MCF 10A (cell line): ENCODE measurements at regions of chr1 and their contacts with region 1.

Region 1: DNA sequence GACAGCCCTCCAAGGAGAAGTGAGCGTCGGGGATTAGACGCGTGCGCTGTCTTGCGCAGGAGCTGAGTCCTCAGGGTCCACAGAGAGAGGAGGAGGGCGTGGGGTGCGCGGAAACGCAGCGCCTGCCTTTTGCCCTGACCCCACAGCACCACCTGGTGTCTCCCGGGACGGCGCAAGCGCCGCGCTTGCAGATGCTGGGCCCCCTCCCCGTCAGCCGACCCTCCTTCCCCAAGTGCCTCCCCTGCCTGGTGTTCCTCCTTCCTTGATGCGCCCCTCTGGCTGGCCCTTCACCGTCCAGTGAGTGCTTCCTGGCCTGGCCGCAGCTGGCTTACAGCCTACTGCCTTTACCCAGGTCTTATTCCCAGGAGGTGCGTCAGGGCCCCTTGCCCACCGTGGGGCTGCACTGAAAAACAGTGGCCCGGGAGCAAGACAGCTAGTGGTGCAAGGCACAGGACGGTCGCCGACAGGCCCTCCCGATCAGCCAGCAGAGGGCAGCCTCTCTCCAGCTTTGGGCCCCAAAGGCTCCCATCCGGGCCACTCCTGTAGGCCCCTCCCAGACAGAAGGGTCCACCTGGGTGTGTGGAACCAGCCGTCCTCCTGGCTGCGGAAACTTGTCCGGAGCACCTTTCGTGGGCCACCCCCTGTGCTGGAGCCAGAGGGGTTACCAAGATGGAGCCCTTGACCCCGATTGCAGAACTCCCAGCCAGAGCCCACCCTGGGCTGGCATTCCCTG is 12.9 kb upstream of the PHLDA3 start:
- DNase-seq: peak; percentile 94
- H3K4me3 Mint-ChIP-seq: peak overlapping the region; percentile 0
- H3K27ac Mint-ChIP-seq: no peak overlapping the region
- H3K4me1 Mint-ChIP-seq: peaks cover 33% of the 10 kb centered on the region
- H3K27me3 Mint-ChIP-seq: no peaks in the 10 kb centered on the region
- CTCF ChIP-seq: peak; percentile 100

Region 2: GRCh38 chr1:201376464-201377374 is 105.2 kb before region 1 on chr1:
- CTCF ChIA-PET with region 1: no interaction called
- POLR2A ChIA-PET with region 1: no interaction called
- intact Hi-C with region 1: no loop called
- DNase-seq: peak; percentile 80
- H3K4me3 Mint-ChIP-seq: no peak overlapping the region
- H3K27ac Mint-ChIP-seq: no peak overlapping the region
- H3K4me1 Mint-ChIP-seq: no peaks in the 10 kb centered on the region
- H3K27me3 Mint-ChIP-seq: peaks cover 37% of the 10 kb centered on the region
- CTCF ChIP-seq: peak; percentile 67

Region 3: DNA sequence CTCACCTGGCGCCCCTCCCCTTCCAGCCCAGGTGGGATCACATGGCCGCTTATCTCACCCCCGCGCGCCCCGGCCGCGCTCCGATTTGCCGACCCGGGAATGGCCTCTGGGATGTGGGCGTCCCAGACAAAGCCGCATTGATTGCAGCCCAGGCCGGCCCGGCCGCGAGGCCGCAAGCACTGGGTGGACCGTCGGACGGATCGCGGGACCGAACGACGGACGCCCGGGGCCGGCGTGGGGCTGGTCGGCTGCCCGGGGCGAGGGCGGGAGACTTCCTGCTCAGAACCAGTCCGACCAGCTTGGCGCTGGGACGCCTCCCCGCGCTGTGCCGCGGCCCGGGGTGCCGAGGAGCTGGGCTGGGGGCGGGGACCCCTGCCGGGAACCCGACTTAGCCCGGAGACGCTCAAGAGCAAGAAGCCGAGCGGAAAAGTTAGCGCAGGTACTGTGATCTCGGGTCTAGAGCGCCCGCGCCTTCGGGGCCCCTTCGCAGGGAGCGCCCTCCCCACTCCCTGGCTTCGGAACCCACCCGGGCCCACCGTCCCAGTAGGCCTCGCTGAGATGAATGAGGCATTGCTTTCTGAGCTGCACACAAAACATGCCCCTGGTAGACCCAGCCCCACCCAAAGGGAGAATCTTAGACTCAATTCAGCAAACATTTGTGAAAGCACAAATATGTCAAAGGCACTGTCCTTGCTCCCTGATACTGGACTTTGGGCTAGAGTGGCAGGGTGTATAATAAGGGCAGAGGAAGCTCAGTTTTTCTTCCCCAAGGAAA is 82.4 kb before region 1 on chr1:
- CTCF ChIA-PET with region 1: interaction called, 11 read pairs
- POLR2A ChIA-PET with region 1: no interaction called
- intact Hi-C with region 1: no loop called
- DNase-seq: peak; percentile 75
- H3K4me3 Mint-ChIP-seq: peak overlapping the region; percentile 66
- H3K27ac Mint-ChIP-seq: no peak overlapping the region
- H3K4me1 Mint-ChIP-seq: peaks cover 24% of the 10 kb centered on the region
- H3K27me3 Mint-ChIP-seq: no peaks in the 10 kb centered on the region
- CTCF ChIP-seq: no peak

Region 4: GRCh38 chr1:201506556-201507359 is 24.8 kb after region 1 on chr1 and contains the start of gene CSRP1:
- CTCF ChIA-PET with region 1: interaction called, 3,816 read pairs
- POLR2A ChIA-PET with region 1: interaction called, 330 read pairs
- intact Hi-C with region 1: loop called (anchors 1 kb)
- DNase-seq: peak; percentile 89
- H3K4me3 Mint-ChIP-seq: peak within 1 kb of the TSS; percentile 79
- H3K27ac Mint-ChIP-seq: peak within 1 kb of the TSS; percentile 86
- H3K4me1 Mint-ChIP-seq: peaks cover 54% of the 10 kb centered on the region
- H3K27me3 Mint-ChIP-seq: no peaks in the 10 kb centered on the region
- CTCF ChIP-seq: no peak
- total RNA-seq, gene CSRP1: 263 and 358 TPM in 2 replicates

Region 5: GRCh38 chr1:201538612-201539551 is 57.0 kb after region 1 on chr1 and contains the start of gene NAV1:
- CTCF ChIA-PET with region 1: interaction called, 13 read pairs
- POLR2A ChIA-PET with region 1: interaction called, 4 read pairs
- intact Hi-C with region 1: no loop called
- DNase-seq: peak; percentile 56
- H3K4me3 Mint-ChIP-seq: peak within 1 kb of the TSS; percentile 70
- H3K27ac Mint-ChIP-seq: no peak within 1 kb of the TSS
- H3K4me1 Mint-ChIP-seq: peaks cover 35% of the 10 kb centered on the region
- H3K27me3 Mint-ChIP-seq: no peaks in the 10 kb centered on the region
- CTCF ChIP-seq: no peak
- total RNA-seq, gene NAV1: 31.4 and 34.9 TPM in 2 replicates

Region 6: GRCh38 chr1:201591348-201591747 is 109.4 kb after region 1 on chr1:
- CTCF ChIA-PET with region 1: no interaction called
- POLR2A ChIA-PET with region 1: no interaction called
- intact Hi-C with region 1: no loop called
- DNase-seq: no peak
- H3K4me3 Mint-ChIP-seq: no peak overlapping the region
- H3K27ac Mint-ChIP-seq: no peak overlapping the region
- H3K4me1 Mint-ChIP-seq: peaks cover 45% of the 10 kb centered on the region
- H3K27me3 Mint-ChIP-seq: peaks cover 10% of the 10 kb centered on the region
- CTCF ChIP-seq: no peak